Activated B cell treated with CpG ODN at 0.5 μM for 24 hours (primary cell): ENCODE measurements at regions of chrX and their contacts with region 1.

Region 1: GRCh38 chrX:15335135-15336022 is at the start of gene PIGA:
- DNase-seq: peak; percentile 77
- ATAC-seq: peak; percentile 94
- H3K4me3 Mint-ChIP-seq: peak within 1 kb of the TSS; percentile 94
- H3K27ac Mint-ChIP-seq: peak within 1 kb of the TSS; percentile 91
- H3K4me1 Mint-ChIP-seq: peaks cover 19% of the 10 kb centered on the region
- H3K27me3 Mint-ChIP-seq: no peaks in the 10 kb centered on the region
- CTCF ChIP-seq: no peak
- total RNA-seq, gene PIGA: 15.7 and 24.9 TPM in 2 replicates

Region 2: DNA sequence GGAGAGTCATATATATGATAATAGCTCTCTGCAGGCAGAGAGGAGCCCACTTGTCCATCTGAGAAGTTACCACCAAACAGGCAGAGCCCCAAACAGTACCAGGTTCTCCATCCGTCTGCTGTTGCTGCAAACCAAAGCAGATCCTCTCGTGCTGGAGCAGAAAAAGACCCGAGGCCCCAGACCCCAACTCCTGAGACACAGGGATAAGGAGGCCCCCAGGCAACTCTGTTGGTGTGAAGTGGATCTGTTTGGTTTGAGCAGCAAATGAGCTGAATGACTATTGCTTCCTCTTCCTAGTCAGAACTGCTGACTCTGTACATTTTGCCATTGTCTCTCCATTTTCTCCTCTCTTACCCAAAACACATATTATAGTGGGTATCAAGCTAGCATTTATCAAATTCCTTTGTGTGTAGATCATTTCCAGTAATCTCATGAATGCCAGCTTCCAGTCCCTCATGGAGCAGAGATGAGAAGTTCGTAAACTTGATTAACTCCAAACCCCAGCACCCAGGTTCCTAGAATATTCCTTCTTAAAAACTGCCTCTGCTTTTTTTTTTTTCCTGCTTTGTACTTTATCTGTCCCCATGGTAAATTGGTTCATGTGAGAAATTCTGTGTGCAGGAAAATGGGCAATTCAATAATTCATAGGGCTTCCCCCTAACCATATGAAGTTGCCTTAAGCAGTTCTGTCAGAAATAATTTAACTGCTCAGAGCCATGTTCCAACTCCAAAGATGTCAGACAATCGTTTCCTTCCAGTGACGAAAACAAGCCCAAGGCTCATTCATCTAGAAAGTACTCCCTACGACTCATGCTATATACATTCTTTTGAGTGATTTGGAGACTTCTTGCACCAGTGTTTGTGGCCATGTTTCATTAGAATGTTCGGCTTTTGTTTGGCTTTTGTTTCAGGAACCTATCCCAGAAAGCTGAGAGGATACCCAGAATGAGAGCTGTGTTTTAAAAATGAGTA is 1917.0 kb before region 1 on chrX:
- CTCF ChIA-PET with region 1: no interaction called
- POLR2A ChIA-PET with region 1: no interaction called
- intact Hi-C with region 1: no loop called
- DNase-seq: no peak
- ATAC-seq: no peak
- H3K4me3 Mint-ChIP-seq: peak overlapping the region; percentile 35
- H3K27ac Mint-ChIP-seq: peak overlapping the region; percentile 92
- H3K4me1 Mint-ChIP-seq: peaks cover 70% of the 10 kb centered on the region
- H3K27me3 Mint-ChIP-seq: no peaks in the 10 kb centered on the region
- CTCF ChIP-seq: no peak

Region 3: GRCh38 chrX:13653022-13653693 is 1682.2 kb before region 1 on chrX and contains the start of gene TCEANC:
- CTCF ChIA-PET with region 1: no interaction called
- POLR2A ChIA-PET with region 1: no interaction called
- intact Hi-C with region 1: loop called (anchors 2 kb)
- DNase-seq: peak; percentile 79
- ATAC-seq: peak; percentile 93
- H3K4me3 Mint-ChIP-seq: peak within 1 kb of the TSS; percentile 91
- H3K27ac Mint-ChIP-seq: peak within 1 kb of the TSS; percentile 91
- H3K4me1 Mint-ChIP-seq: peaks cover 13% of the 10 kb centered on the region
- H3K27me3 Mint-ChIP-seq: no peaks in the 10 kb centered on the region
- CTCF ChIP-seq: no peak
- total RNA-seq, gene TCEANC: 5.1 and 5.9 TPM in 2 replicates

Region 4: GRCh38 chrX:14872851-14873675 is 462.3 kb before region 1 on chrX and contains the starts of genes FANCB and MOSPD2:
- CTCF ChIA-PET with region 1: no interaction called
- POLR2A ChIA-PET with region 1: no interaction called
- intact Hi-C with region 1: loop called (anchors 1 kb)
- DNase-seq: peak; percentile 82
- ATAC-seq: peak; percentile 93
- H3K4me3 Mint-ChIP-seq: peak within 1 kb of the TSS; percentile 87
- H3K27ac Mint-ChIP-seq: peak within 1 kb of the TSS; percentile 83
- H3K4me1 Mint-ChIP-seq: peaks cover 7% of the 10 kb centered on the region
- H3K27me3 Mint-ChIP-seq: no peaks in the 10 kb centered on the region
- CTCF ChIP-seq: no peak
- total RNA-seq, gene FANCB: 3.9 and 4.0 TPM in 2 replicates
- total RNA-seq, gene MOSPD2: 15.6 and 19.7 TPM in 2 replicates

Region 5: GRCh38 chrX:15321447-15321846 is 13.9 kb before region 1 on chrX:
- CTCF ChIA-PET with region 1: no interaction called
- POLR2A ChIA-PET with region 1: no interaction called
- intact Hi-C with region 1: no loop called
- DNase-seq: no peak
- ATAC-seq: no peak
- H3K4me3 Mint-ChIP-seq: no peak overlapping the region
- H3K27ac Mint-ChIP-seq: no peak overlapping the region
- H3K4me1 Mint-ChIP-seq: no peaks in the 10 kb centered on the region
- H3K27me3 Mint-ChIP-seq: no peaks in the 10 kb centered on the region
- CTCF ChIP-seq: no peak

Region 6: GRCh38 chrX:15789979-15790768 is 454.8 kb after region 1 on chrX and contains the start of gene ZRSR2:
- CTCF ChIA-PET with region 1: no interaction called
- POLR2A ChIA-PET with region 1: interaction called, 5 read pairs
- intact Hi-C with region 1: loop called (anchors 1 kb)
- DNase-seq: peak; percentile 76
- ATAC-seq: peak; percentile 93
- H3K4me3 Mint-ChIP-seq: no peak within 1 kb of the TSS
- H3K27ac Mint-ChIP-seq: peak within 1 kb of the TSS; percentile 35
- H3K4me1 Mint-ChIP-seq: peaks cover 18% of the 10 kb centered on the region
- H3K27me3 Mint-ChIP-seq: no peaks in the 10 kb centered on the region
- CTCF ChIP-seq: no peak
- total RNA-seq, gene ZRSR2: 19.8 and 20.9 TPM in 2 replicates

Region 7: DNA sequence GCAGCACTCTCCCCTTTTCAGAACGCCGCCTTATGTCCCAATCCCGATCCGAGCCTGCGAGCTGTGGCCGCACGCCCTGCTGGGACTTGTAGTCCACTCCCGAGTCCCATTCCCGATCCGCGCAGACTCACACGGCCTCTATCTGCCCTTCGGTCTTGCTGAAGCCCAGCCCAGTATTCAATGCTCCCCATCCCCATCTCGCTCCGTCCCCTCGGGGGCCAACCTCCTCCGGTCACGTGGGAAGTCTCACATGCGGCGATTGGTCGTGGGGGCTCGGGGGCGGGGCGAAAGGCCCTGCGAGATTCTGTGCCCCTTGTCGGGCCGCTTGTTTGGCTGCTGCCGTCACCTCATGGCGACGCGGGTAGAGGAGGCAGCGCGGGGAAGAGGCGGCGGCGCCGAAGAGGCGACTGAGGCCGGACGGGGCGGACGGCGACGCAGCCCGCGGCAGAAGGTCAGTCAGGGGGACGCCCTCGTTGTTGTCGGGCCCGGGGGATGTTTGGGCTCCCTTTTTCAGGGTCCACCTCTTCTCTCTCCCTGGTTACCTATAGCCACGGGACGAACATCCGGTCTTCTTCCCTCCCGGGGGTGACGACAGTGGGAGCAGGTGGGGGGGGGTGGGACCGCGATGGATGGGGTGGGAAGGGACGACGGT is 1450.9 kb after region 1 on chrX and contains the start of gene TXLNG:
- CTCF ChIA-PET with region 1: no interaction called
- POLR2A ChIA-PET with region 1: no interaction called
- intact Hi-C with region 1: loop called (anchors 5 kb)
- DNase-seq: peak; percentile 81
- ATAC-seq: peak; percentile 95
- H3K4me3 Mint-ChIP-seq: peak within 1 kb of the TSS; percentile 97
- H3K27ac Mint-ChIP-seq: peak within 1 kb of the TSS; percentile 90
- H3K4me1 Mint-ChIP-seq: peaks cover 18% of the 10 kb centered on the region
- H3K27me3 Mint-ChIP-seq: no peaks in the 10 kb centered on the region
- CTCF ChIP-seq: no peak
- total RNA-seq, gene TXLNG: 12.7 and 13.1 TPM in 2 replicates